CD8-positive, alpha-beta memory T cell (primary cell): ENCODE measurements at regions of chr7 and their contacts with region 1.

Region 1: GRCh38 chr7:78020136-78020873 is 221.7 kb downstream of the PHTF2 start:
- DNase-seq: peak in 3 of 5 donors; percentile 13 to 52 (median 33)
- H3K4me3 ChIP-seq: peak overlapping the region; percentile 23
- H3K4me3 Mint-ChIP-seq: peak overlapping the region; percentile 67 to 93 (median 83)
- H3K27ac ChIP-seq: peak overlapping the region; percentile 26
- H3K27ac Mint-ChIP-seq: peak overlapping the region in 7 of 8 donors; percentile 51 to 88 (median 80)
- H3K4me1 ChIP-seq: peaks cover 6% of the 10 kb centered on the region
- H3K4me1 Mint-ChIP-seq: peaks cover 10 to 23% (median 19%) of the 10 kb centered on the region in 3 donors
- H3K27me3 ChIP-seq: no peaks in the 10 kb centered on the region
- H3K27me3 Mint-ChIP-seq: peaks cover 4 to 18% of the 10 kb centered on the region in 2 donors

Region 2: DNA sequence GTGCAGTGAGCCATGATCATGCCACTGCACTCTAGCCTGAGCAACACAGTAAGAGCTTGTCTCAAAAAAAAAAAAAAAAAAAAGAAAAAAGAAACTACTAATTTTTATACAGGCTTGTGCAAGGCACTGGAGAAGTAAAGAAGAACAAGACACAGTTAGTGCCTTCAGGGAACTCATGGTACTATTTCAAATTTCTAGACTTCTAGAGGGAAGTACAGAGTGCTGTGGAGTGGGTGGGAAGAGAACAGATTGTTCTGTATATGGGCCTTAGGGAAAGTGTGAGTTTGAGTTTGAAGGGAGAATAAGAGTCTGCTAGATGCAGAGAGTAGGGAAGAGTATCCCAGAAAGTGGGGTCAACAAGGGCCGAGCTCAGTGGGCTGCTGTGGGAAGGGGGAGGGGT is 13.1 kb after region 1 on chr7:
- CTCF ChIA-PET with region 1: interaction called, 15 read pairs
- POLR2A ChIA-PET with region 1: no interaction called
- DNase-seq: no peak
- H3K4me3 ChIP-seq: no peak overlapping the region
- H3K4me3 Mint-ChIP-seq: no peak overlapping the region
- H3K27ac ChIP-seq: no peak overlapping the region
- H3K27ac Mint-ChIP-seq: peak overlapping the region in 1 of 8 donors; percentile 68
- H3K4me1 ChIP-seq: no peaks in the 10 kb centered on the region
- H3K4me1 Mint-ChIP-seq: no peaks in the 10 kb centered on the region
- H3K27me3 ChIP-seq: peaks cover 3% of the 10 kb centered on the region
- H3K27me3 Mint-ChIP-seq: peaks cover 13 to 42% of the 10 kb centered on the region in 2 donors

Region 3: GRCh38 chr7:78039790-78040776 is 19.8 kb after region 1 on chr7:
- CTCF ChIA-PET with region 1: interaction called, 51 read pairs
- POLR2A ChIA-PET with region 1: interaction called, 4 read pairs
- DNase-seq: peak; percentile 20 to 63 (median 30)
- H3K4me3 ChIP-seq: no peak overlapping the region
- H3K4me3 Mint-ChIP-seq: no peak overlapping the region
- H3K27ac ChIP-seq: no peak overlapping the region
- H3K27ac Mint-ChIP-seq: no peak overlapping the region
- H3K4me1 ChIP-seq: no peaks in the 10 kb centered on the region
- H3K4me1 Mint-ChIP-seq: peaks cover 0 to 5% (median 2%) of the 10 kb centered on the region in 3 donors
- H3K27me3 ChIP-seq: peaks cover 3% of the 10 kb centered on the region
- H3K27me3 Mint-ChIP-seq: peaks cover 6 to 32% of the 10 kb centered on the region in 2 donors

Region 4: DNA sequence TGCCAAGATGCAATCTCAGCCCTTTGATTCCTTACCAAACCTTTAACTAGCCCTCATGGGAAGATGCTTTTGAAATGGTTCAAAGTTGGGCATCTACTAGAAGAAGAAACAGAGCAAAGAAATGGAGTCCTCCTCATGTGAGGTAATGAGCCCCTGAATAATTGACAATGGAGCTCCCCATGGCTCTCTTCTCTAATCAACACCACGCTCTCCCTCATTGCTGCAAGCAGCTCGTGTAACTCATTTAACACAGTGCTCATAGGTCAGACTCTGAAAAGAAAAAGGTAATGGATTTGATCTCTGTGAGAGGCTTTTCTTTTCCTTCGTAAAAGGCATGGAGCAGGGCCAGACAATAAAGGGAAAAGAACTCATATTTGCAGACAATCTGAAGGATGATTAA is 91.1 kb after region 1 on chr7:
- CTCF ChIA-PET with region 1: no interaction called
- POLR2A ChIA-PET with region 1: no interaction called
- DNase-seq: no peak
- H3K4me3 ChIP-seq: no peak overlapping the region
- H3K4me3 Mint-ChIP-seq: no peak overlapping the region
- H3K27ac ChIP-seq: no peak overlapping the region
- H3K27ac Mint-ChIP-seq: no peak overlapping the region
- H3K4me1 ChIP-seq: no peaks in the 10 kb centered on the region
- H3K4me1 Mint-ChIP-seq: no peaks in the 10 kb centered on the region
- H3K27me3 ChIP-seq: no peaks in the 10 kb centered on the region
- H3K27me3 Mint-ChIP-seq: peaks cover 16 to 66% of the 10 kb centered on the region in 2 donors